Right ventricle myocardium superior (tissue), 1 donor: ENCODE measurements at regions of chr2 and their contacts with region 1.

Region 1: DNA sequence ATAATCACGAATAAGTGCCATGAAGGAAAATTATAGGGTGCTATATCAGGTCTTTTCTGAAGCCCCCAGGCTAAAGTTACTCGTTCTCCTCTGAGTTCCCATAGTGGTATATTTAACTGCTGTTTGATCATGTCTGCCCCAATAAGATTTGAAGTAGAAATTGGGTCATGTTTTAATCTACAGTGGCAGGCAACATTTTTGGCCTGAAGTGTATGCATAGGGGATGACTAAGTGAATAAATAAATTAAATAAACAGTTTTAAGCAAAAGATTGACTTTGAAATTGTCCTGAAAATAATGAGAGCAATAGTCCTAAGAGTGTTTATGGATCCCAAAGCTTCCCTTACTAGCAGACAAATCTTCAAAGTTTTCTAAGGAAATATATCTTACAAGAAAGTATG is 500.9 kb downstream of the TNS1 start:
- DNase-seq: no peak
- ATAC-seq: no peak

Region 2: GRCh38 chr2:217186668-217187159 is 315.2 kb before region 1 on chr2:
- intact Hi-C with region 1: loop called (anchors 10 kb)
- DNase-seq: peak; percentile 44
- ATAC-seq: peak; percentile 90